Prostate gland (tissue), 2 donors: ENCODE measurements at regions of chr13 and their contacts with region 1.

Region 1: DNA sequence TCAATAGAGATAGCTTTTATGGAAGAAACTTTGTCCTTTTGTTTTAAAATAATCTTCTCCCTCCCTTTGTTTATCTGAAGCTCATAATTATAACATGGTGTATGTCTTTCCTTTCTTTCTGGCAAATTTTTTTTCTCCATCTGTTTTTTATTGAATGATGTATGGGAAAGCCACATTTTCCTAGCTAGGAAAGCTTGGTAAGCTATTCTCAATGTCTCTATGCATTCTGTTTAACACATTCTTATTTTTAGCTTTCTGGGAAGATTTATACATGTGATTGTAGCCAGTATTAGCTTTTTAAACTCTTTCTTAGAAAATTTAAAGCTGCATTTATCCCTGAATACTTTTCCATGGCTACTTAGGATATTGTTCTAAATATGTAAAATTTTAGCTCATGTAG is 124.9 kb upstream of the CSNK1A1L start:
- DNase-seq: no peak
- H3K4me3 ChIP-seq: no peak overlapping the region
- H3K27ac ChIP-seq: no peak overlapping the region
- H3K4me1 ChIP-seq: no peaks in the 10 kb centered on the region
- H3K27me3 ChIP-seq: no peaks in the 10 kb centered on the region
- CTCF ChIP-seq: no peak
- POLR2A ChIP-seq: no peak

Region 2: GRCh38 chr13:37109051-37109678 is 121.2 kb before region 1 on chr13:
- intact Hi-C with region 1: no loop called
- DNase-seq: no peak
- H3K4me3 ChIP-seq: no peak overlapping the region
- H3K27ac ChIP-seq: no peak overlapping the region
- H3K4me1 ChIP-seq: no peaks in the 10 kb centered on the region
- H3K27me3 ChIP-seq: no peaks in the 10 kb centered on the region
- CTCF ChIP-seq: peak in 3 of 4 experiments; percentile 47 to 66 (median 49)
- POLR2A ChIP-seq: no peak

Region 3: DNA sequence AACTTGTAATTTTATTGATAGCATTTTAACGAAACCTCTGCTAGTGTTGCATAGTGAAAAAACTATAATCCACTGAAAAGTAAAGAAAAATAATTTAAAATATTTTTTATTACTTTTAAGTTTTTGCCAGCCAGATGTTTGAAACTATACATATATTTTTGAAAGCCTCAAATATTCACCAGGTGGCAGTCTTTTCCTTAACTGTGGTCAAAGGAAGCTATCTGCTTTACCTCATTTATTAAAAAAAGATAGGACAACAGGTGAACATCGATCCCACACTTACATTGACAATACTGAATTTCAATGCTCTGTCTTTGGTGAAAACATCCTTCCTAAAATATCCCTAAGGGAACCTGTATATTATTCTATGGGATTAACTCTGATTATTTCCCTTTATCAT is 538.7 kb after region 1 on chr13:
- intact Hi-C with region 1: loop called (anchors 10 kb)
- DNase-seq: no peak
- H3K4me3 ChIP-seq: no peak overlapping the region
- H3K27ac ChIP-seq: no peak overlapping the region
- H3K4me1 ChIP-seq: no peaks in the 10 kb centered on the region
- H3K27me3 ChIP-seq: no peaks in the 10 kb centered on the region
- CTCF ChIP-seq: peak in 2 of 4 experiments; percentile 8 to 28
- POLR2A ChIP-seq: no peak